Activated CD4-positive, alpha-beta memory T cell treated with anti-CD3 and anti-CD28 coated beads for 36 hours (primary cell): ENCODE measurements at regions of chr11 and their contacts with region 1.

Region 1: GRCh38 chr11:94602430-94603372 is 35.5 kb downstream of the PIWIL4 start:
- DNase-seq: peak; percentile 59
- H3K4me3 Mint-ChIP-seq: no peak overlapping the region
- H3K27ac Mint-ChIP-seq: no peak overlapping the region
- H3K4me1 Mint-ChIP-seq: no peaks in the 10 kb centered on the region
- H3K27me3 Mint-ChIP-seq: no peaks in the 10 kb centered on the region

Region 2: GRCh38 chr11:94519478-94520084 is 83.1 kb before region 1 on chr11:
- CTCF ChIA-PET with region 1: interaction called, 23 read pairs
- POLR2A ChIA-PET with region 1: no interaction called
- intact Hi-C with region 1: loop called (anchors 1 kb)
- DNase-seq: no peak
- H3K4me3 Mint-ChIP-seq: no peak overlapping the region
- H3K27ac Mint-ChIP-seq: no peak overlapping the region
- H3K4me1 Mint-ChIP-seq: no peaks in the 10 kb centered on the region
- H3K27me3 Mint-ChIP-seq: peaks cover 15% of the 10 kb centered on the region